HEK293 (cell line): ENCODE measurements at regions of chr11 and their contacts with region 1.

Region 1: GRCh38 chr11:72413914-72414628 is 20.3 kb downstream of the CLPB start:
- H3K4me3 ChIP-seq: no peak overlapping the region
- H3K27ac ChIP-seq: no peak overlapping the region
- H3K4me1 ChIP-seq: peaks cover 5% of the 10 kb centered on the region; the same call in 1 of the 2 replicates
- CTCF ChIP-seq: peak; percentile 76

Region 2: GRCh38 chr11:72293910-72294615 is 120.0 kb before region 1 on chr11:
- CTCF ChIA-PET with region 1: interaction called, 18 read pairs
- POLR2A ChIA-PET with region 1: no interaction called
- H3K4me3 ChIP-seq: no peak overlapping the region
- H3K27ac ChIP-seq: no peak overlapping the region
- H3K4me1 ChIP-seq: no peaks in the 10 kb centered on the region
- CTCF ChIP-seq: no peak

Region 3: DNA sequence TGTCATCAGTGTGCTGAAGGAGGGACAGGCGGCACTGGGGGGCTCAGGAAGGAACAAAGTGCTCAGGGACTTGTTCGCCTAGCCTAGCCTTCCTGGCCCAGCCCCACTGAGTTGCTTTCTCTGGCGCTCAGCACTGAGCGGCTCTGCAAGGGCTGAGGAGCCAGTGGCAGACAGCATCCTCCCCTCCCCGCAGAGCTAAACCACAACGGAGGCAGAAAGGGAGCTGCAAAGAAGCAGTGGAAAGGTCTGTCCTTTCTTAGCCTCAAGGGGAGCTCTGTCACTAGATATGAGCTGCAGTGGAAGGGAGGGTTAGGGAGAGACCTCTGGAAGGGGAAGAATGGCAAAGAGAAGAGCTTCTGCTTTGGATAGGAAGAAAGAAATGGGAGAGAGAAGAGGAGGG is 80.4 kb before region 1 on chr11:
- CTCF ChIA-PET with region 1: interaction called, 20 read pairs
- POLR2A ChIA-PET with region 1: no interaction called
- H3K4me3 ChIP-seq: no peak overlapping the region
- H3K27ac ChIP-seq: no peak overlapping the region
- H3K4me1 ChIP-seq: no peaks in the 10 kb centered on the region
- CTCF ChIP-seq: peak; percentile 27; the same call in 1 of the 2 replicates

Region 4: GRCh38 chr11:72352859-72353551 is 61.1 kb before region 1 on chr11:
- CTCF ChIA-PET with region 1: interaction called, 10 read pairs
- POLR2A ChIA-PET with region 1: no interaction called
- H3K4me3 ChIP-seq: no peak overlapping the region
- H3K27ac ChIP-seq: no peak overlapping the region
- H3K4me1 ChIP-seq: peaks cover 3% of the 10 kb centered on the region; the same call in 1 of the 2 replicates
- CTCF ChIP-seq: peak; percentile 38; the same call in 1 of the 2 replicates

Region 5: GRCh38 chr11:72391638-72392423 is 22.2 kb before region 1 on chr11:
- CTCF ChIA-PET with region 1: interaction called, 10 read pairs
- POLR2A ChIA-PET with region 1: interaction called, 3 read pairs
- H3K4me3 ChIP-seq: no peak overlapping the region
- H3K27ac ChIP-seq: no peak overlapping the region
- H3K4me1 ChIP-seq: no peaks in the 10 kb centered on the region
- CTCF ChIP-seq: no peak